ENCODE measurements at regions of chr10 and their contacts with region 1.

Region 1: GRCh38 chr10:71319042-71319799 is at the start of gene SLC29A3:
- DNase-seq: peak; percentile 64 to 88 (median 77)
- H3K4me3 ChIP-seq: peak within 1 kb of the TSS; percentile 65
- H3K4me3 Mint-ChIP-seq: peak within 1 kb of the TSS; percentile 88 to 97 (median 95)
- H3K27ac ChIP-seq: peak within 1 kb of the TSS; percentile 59
- H3K27ac Mint-ChIP-seq: peak within 1 kb of the TSS; percentile 29 to 98 (median 86)
- H3K4me1 ChIP-seq: peaks cover 18% of the 10 kb centered on the region
- H3K4me1 Mint-ChIP-seq: peaks cover 37 to 54% (median 39%) of the 10 kb centered on the region in 3 donors
- H3K27me3 ChIP-seq: no peaks in the 10 kb centered on the region
- H3K27me3 Mint-ChIP-seq: no peaks in the 10 kb centered on the region
- total RNA-seq, gene SLC29A3: 6.0 to 8.2 TPM

Region 2: GRCh38 chr10:71569775-71570588 is 250.8 kb after region 1 on chr10:
- CTCF ChIA-PET with region 1: interaction called, 117 read pairs
- POLR2A ChIA-PET with region 1: no interaction called
- DNase-seq: peak; percentile 51 to 85 (median 71)
- H3K4me3 ChIP-seq: no peak overlapping the region
- H3K4me3 Mint-ChIP-seq: no peak overlapping the region
- H3K27ac ChIP-seq: no peak overlapping the region
- H3K27ac Mint-ChIP-seq: no peak overlapping the region
- H3K4me1 ChIP-seq: no peaks in the 10 kb centered on the region
- H3K4me1 Mint-ChIP-seq: no peaks in the 10 kb centered on the region
- H3K27me3 ChIP-seq: no peaks in the 10 kb centered on the region
- H3K27me3 Mint-ChIP-seq: peaks cover 1 to 3% of the 10 kb centered on the region in 2 donors